ENCODE measurements at regions of chr11 and their contacts with region 1.

Region 1: DNA sequence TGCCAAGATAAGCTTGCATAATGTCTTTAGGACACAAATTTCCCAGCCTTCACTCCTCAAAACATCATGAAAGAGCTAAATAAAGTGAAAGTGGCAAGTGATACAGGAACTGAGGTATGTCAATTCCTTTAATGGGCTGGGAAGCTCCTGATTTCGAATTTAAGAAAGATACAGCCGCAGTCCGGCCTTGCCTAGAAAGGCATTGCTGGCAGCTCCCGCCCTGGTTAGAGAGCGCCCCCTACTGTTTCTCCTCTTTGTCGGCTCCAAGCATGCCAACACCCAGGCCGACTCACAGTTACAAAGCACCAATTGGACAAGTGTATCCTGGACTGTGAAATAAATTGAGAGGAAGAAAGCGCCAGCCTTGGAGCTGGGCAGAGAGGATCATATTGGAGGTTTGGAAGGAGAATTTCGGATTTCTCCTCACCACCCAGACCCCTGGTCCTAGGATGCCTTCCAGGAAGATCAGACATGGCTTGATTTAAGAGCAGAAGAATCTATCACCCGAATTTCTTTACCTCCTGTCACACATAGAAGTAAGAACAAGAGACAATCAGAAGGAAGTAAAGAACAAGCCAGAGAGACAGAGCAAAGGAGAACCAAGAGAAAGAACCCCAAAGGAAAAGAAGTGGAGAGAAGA is 84.0 kb downstream of the FAM76B start:
- DNase-seq: peak; percentile 82 to 91 (median 87)
- ATAC-seq: peak; percentile 90 to 99 (median 98)
- H3K4me3 ChIP-seq: no peak overlapping the region
- H3K27ac ChIP-seq: peak overlapping the region in 8 of 12 donors; percentile 1 to 47 (median 22)
- H3K4me1 ChIP-seq: peaks cover 0 to 30% (median 8%) of the 10 kb centered on the region in 12 donors
- H3K27me3 ChIP-seq: no peaks in the 10 kb centered on the region
- CTCF ChIP-seq: peak; percentile 88 to 99 (median 93)
- POLR2A ChIP-seq: no peak

Region 2: DNA sequence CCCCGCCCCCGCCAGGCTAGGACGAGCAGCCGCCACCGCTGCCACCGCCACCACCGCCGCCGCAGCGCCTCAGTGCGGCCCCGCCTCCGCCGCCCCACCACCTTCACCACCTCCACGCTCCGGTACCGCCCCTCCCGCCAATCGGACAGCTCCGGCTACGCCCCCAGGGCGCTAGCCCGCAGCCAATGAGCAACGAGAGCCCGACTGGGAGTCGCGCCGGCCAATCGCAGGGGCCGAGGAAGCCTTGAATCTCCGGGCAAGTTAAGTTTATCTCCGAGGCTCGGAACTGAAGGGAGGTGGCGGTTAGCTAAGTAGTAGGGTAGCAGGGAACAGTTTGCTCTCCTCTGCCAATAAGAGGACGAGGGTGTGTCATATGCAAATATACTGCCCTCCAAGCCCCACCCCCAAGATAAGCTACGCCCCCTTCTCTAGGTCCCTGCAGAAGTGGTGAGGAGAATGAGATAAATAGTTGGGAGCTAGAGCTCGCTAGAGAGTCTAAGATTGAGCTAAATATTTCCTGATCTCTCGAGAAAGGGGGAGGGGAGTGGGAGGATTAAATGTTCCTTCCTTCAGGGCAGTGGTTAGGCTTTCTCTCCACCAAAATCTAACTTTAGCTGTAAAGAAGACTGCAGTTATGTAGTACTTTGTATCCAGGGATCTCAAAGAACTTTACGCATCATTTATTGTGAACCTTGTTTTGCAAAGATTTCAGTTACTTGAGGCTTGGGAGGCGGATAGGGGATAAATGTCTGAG is 474.3 kb before region 1 on chr11 and contains the start of gene SESN3:
- intact Hi-C with region 1: loop called in 8 of 10 experiments (anchors 2 to 10 kb)
- DNase-seq: peak; percentile 99
- ATAC-seq: peak; percentile 98 to 99 (median 98)
- H3K4me3 ChIP-seq: peak within 1 kb of the TSS; percentile 78 to 95 (median 88)
- H3K27ac ChIP-seq: peak within 1 kb of the TSS; percentile 36 to 90 (median 81)
- H3K4me1 ChIP-seq: peaks cover 0 to 48% (median 9%) of the 10 kb centered on the region in 12 donors
- H3K27me3 ChIP-seq: no peaks in the 10 kb centered on the region
- CTCF ChIP-seq: peak in 5 of 12 donors; percentile 15 to 43 (median 39)
- POLR2A ChIP-seq: peak in 1 of 2 donors; percentile 78
- total RNA-seq, gene SESN3: 3.1 to 26.5 (median 5.8) TPM

Region 3: DNA sequence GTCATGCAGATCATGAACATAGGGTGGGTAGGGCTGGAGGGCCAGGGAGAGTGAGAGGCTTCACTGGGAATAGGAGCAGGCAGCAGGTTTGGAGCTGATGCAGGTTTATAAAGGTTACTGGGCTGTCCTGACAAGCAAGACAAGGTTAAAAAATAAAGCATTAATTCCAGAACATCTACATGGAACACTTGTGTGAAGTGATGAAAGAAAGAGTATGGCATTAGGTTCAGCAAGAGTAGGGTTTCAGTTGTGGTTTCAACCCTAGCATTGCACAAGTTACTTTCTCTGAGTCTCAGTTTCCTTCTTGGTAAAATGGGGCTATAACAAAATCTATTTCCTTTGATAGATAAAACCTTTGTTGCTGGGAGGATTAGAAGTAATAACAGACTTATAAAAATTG is 360.0 kb before region 1 on chr11:
- intact Hi-C with region 1: loop called in 1 of 10 experiments (anchors 10 kb)
- DNase-seq: no peak
- ATAC-seq: no peak
- H3K4me3 ChIP-seq: no peak overlapping the region
- H3K27ac ChIP-seq: no peak overlapping the region
- H3K4me1 ChIP-seq: no peaks in the 10 kb centered on the region
- H3K27me3 ChIP-seq: no peaks in the 10 kb centered on the region
- CTCF ChIP-seq: no peak
- POLR2A ChIP-seq: no peak

Region 4: DNA sequence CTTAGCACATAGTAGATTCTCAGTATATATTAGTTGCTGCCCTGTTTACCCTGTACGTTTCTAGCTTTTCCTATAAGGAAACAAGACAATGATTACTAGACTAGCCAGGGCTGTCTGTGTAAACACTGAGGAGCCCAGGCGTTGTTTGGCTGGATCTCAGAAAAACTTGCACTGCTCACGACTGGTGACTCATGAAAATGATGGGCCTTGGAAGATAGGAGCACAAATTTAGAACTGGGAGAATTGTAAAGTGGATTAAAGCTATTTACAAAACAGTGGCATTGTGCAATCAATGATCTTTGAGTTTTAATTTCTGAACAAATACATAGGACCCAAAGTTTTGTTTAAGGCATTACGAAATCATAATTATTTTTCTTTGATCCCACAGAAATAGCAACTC is 192.9 kb before region 1 on chr11:
- intact Hi-C with region 1: loop called in 1 of 10 experiments (anchors 5 kb)
- DNase-seq: peak in 3 of 5 donors; percentile 36 to 47 (median 38)
- ATAC-seq: peak; percentile 45 to 89 (median 74)
- H3K4me3 ChIP-seq: no peak overlapping the region
- H3K27ac ChIP-seq: peak overlapping the region in 5 of 12 donors; percentile 7 to 48 (median 40)
- H3K4me1 ChIP-seq: peaks cover 0 to 32% (median 2%) of the 10 kb centered on the region in 12 donors
- H3K27me3 ChIP-seq: no peaks in the 10 kb centered on the region
- CTCF ChIP-seq: no peak
- POLR2A ChIP-seq: no peak

Region 5: DNA sequence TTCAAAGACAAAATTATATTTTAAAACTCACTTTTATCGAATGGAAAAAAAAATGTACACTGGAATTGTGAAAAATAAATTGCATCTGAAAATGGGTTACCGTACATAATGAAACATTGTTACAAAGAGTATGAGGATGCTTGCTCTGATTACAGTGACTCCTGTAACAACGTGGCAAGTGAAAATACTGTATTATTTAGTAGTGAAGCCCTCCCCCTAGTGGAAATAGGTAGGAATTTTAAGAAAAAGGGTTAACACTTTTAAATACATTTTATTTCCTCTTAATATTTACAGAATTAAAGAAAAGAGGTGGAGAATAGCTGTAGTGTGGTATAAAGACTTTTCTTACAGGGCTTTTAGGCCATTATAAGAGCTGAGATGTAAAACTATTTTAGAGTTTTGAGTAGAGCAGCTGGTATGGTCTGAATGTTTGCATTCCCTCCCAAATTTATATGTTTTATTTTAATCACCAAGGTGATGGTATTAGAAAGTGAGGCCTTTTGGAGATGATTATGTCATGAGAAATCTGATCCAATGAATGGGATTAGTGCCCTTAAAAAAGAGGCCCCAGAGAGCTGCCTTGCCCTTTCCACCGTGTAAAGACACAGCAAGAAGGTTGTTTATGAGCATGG is 58.8 kb after region 1 on chr11:
- intact Hi-C with region 1: loop called in 1 of 10 experiments (anchors 10 kb)
- DNase-seq: no peak
- ATAC-seq: peak in 3 of 4 donors; percentile 61 to 69 (median 62)
- H3K4me3 ChIP-seq: no peak overlapping the region
- H3K27ac ChIP-seq: no peak overlapping the region
- H3K4me1 ChIP-seq: peaks cover 0 to 16% (median 0%) of the 10 kb centered on the region in 12 donors
- H3K27me3 ChIP-seq: no peaks in the 10 kb centered on the region
- CTCF ChIP-seq: peak; percentile 56 to 85 (median 71)
- POLR2A ChIP-seq: no peak

Region 6: GRCh38 chr11:96580641-96581040 is 875.0 kb after region 1 on chr11:
- intact Hi-C with region 1: no loop called
- DNase-seq: no peak
- ATAC-seq: no peak
- H3K4me3 ChIP-seq: no peak overlapping the region
- H3K27ac ChIP-seq: no peak overlapping the region
- H3K4me1 ChIP-seq: no peaks in the 10 kb centered on the region
- H3K27me3 ChIP-seq: no peaks in the 10 kb centered on the region
- CTCF ChIP-seq: no peak
- POLR2A ChIP-seq: no peak

Measured in heart left ventricle (tissue), 16 donors.